ENCODE measurements at regions of chr13 and their contacts with region 1.

Region 1: GRCh38 chr13:26872525-26873385 is 112.2 kb upstream of the GPR12 start:
- DNase-seq: peak; percentile 50
- CTCF ChIP-seq: peak; percentile 69

Region 2: DNA sequence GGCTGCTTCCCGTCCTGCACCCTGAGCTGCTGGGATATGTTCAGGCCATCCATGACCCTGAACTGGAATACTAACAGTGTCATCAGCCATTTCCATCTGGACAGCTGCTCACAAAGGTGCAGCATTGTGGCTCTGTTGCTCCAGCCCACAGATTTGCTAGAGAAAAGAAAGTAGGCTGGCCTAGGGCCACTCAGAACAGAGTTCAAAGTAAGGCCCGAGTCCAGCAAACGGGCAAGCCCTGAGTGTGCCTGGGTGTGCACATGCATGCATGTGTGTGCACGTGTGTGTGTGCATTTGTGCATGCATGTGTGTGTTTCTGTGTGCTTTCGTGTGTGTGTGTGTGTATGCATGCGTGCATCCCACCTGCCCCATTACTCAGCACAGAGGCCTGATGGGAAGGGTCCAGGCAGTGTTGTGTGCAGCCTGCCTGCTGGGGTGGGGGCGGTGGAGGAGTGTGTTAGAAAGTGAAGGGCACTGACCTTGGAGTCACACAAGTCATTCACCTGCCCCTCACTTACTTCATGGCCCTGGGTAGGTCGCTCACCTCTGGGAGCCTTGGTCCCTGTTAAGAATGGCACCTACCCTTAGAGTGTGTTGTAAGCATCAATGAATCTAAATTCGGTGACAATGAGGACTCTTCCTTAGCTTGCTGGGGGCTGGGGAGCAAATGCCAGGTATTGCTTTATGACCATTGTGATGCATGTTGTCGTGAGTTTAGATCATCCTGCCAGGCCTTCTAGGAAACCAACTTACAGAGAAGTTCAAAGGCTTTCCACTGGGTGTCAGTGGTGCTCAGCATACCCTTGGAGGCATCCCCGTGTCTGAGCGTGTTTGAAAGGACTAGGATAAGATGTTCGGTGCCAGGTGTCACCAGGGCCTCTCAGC is 165.4 kb before region 1 on chr13:
- CTCF ChIA-PET with region 1: interaction called, 17 read pairs
- POLR2A ChIA-PET with region 1: no interaction called
- DNase-seq: peak; percentile 52
- CTCF ChIP-seq: peak; percentile 42

Region 3: GRCh38 chr13:26853323-26853722 is 19.4 kb before region 1 on chr13:
- CTCF ChIA-PET with region 1: interaction called, 10 read pairs
- POLR2A ChIA-PET with region 1: no interaction called
- DNase-seq: no peak
- CTCF ChIP-seq: no peak

Region 4: GRCh38 chr13:26861941-26862340 is 10.8 kb before region 1 on chr13:
- CTCF ChIA-PET with region 1: interaction called, 24 read pairs
- POLR2A ChIA-PET with region 1: no interaction called
- DNase-seq: no peak
- CTCF ChIP-seq: no peak

Region 5: DNA sequence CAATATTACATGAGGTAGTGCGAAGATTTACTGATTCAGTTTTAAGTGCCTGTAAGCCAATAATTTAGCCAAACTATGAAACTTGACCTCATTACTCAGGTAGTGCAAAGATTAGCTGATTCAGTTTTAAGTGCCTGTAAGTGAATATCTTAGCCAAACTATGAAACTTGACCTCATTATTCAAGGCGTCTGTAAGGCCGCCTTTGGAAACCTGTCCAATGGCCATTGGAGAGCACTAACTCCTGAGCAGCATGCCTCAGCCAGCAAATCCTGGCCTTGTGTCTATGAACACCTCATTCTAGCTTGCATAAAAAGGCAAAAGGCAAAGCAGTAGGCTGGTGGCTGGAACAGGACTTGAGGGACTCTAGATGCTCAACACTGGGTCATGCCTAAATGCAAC is 14.8 kb after region 1 on chr13:
- CTCF ChIA-PET with region 1: interaction called, 22 read pairs
- POLR2A ChIA-PET with region 1: no interaction called
- DNase-seq: no peak
- CTCF ChIP-seq: no peak